HEK293 (cell line): ENCODE measurements at regions of chr16 and their contacts with region 1.

Region 1: GRCh38 chr16:57084257-57084770 is 8.1 kb upstream of the CPNE2 start:
- H3K4me3 ChIP-seq: no peak overlapping the region
- H3K27ac ChIP-seq: no peak overlapping the region
- H3K4me1 ChIP-seq: no peaks in the 10 kb centered on the region
- CTCF ChIP-seq: peak; percentile 90

Region 2: GRCh38 chr16:57051696-57052228 is 32.6 kb before region 1 on chr16:
- CTCF ChIA-PET with region 1: interaction called, 12 read pairs
- POLR2A ChIA-PET with region 1: no interaction called
- H3K4me3 ChIP-seq: no peak overlapping the region
- H3K27ac ChIP-seq: no peak overlapping the region
- H3K4me1 ChIP-seq: no peaks in the 10 kb centered on the region
- CTCF ChIP-seq: no peak

Region 3: GRCh38 chr16:57071831-57072582 is 12.3 kb before region 1 on chr16:
- CTCF ChIA-PET with region 1: interaction called, 12 read pairs
- POLR2A ChIA-PET with region 1: no interaction called
- H3K4me3 ChIP-seq: no peak overlapping the region
- H3K27ac ChIP-seq: no peak overlapping the region
- H3K4me1 ChIP-seq: no peaks in the 10 kb centered on the region
- CTCF ChIP-seq: no peak

Region 4: DNA sequence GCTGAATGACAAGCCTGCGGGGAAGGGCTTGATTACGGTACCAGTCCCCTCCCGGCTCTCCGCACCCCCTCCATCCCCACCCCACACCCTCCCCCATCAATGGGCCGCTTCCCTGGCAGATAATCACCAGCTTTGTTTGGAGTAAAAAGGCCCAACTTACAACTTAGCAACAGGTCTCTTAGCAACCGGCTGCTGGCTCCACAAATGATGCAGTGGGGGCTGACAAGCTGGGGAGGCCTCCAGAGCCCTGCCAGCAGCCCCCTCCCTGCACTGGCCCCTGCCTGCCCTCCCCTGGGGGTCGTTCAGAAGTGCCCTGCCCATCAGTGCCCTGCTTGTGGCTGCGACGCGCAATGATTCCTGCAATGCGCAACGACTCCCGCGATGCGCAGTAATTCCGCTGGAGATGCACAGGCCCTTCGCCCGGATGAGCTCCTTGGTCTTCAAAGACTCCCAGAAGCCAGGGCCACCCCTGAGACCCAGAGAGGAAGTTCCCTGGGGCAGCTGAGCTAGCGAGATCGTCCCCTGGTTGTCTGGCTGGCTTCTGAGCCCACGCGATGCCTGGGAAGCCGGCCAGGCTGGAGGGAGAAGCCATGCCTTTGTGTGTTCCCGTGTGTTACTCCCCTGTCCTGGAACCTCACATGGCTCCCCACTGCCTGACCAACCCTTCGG is 31.3 kb after region 1 on chr16:
- CTCF ChIA-PET with region 1: interaction called, 13 read pairs
- POLR2A ChIA-PET with region 1: no interaction called
- H3K4me3 ChIP-seq: no peak overlapping the region
- H3K27ac ChIP-seq: no peak overlapping the region
- H3K4me1 ChIP-seq: no peaks in the 10 kb centered on the region
- CTCF ChIP-seq: no peak

Region 5: DNA sequence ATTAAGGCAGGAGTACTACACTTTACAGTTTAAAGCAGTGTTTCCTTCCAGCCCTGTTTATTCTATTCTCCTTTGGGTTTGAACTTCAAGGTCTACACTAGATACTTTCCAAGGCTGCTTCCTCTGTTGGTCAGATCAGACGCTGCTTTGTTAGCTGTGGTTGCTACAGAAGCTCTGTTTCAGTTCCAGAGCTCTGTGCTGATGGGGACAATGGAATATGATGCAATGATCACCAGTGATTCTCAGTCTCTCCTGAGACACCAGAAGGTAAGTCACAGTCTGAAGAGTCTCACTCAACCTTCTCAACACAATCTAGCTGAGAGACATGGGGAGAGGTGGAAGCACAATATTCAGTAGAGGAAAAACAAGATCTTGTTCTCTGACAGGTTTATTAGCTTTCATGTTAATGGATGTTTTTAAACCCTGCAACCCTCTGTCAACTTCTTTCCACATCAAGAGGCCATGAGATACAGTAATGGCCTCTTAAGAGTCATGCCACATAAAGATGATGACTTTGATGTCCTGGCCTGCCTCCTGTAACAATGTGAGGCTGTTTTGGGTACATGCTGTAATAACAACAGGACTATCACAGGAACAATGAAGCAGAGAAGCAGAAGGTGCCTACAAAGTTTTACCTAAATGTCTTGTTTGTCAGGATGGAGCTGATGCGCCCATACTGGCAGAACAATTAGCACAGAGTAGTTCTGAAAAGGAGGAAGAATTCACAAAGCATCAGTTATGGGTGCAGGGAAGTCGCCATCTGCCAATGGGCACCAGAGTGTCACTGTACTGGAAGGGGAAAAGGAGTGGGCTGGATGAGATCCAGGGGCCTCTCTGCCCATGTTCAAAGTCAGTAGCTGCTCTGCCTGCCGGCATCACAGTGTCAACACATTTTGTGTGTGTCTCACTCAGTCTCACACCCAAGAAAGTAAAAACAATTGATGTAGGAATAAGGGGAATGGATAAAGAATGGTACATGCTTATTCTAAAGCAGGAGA is 68.1 kb after region 1 on chr16:
- CTCF ChIA-PET with region 1: interaction called, 15 read pairs
- POLR2A ChIA-PET with region 1: no interaction called
- H3K4me3 ChIP-seq: no peak overlapping the region
- H3K27ac ChIP-seq: no peak overlapping the region
- H3K4me1 ChIP-seq: no peaks in the 10 kb centered on the region
- CTCF ChIP-seq: no peak

Region 6: DNA sequence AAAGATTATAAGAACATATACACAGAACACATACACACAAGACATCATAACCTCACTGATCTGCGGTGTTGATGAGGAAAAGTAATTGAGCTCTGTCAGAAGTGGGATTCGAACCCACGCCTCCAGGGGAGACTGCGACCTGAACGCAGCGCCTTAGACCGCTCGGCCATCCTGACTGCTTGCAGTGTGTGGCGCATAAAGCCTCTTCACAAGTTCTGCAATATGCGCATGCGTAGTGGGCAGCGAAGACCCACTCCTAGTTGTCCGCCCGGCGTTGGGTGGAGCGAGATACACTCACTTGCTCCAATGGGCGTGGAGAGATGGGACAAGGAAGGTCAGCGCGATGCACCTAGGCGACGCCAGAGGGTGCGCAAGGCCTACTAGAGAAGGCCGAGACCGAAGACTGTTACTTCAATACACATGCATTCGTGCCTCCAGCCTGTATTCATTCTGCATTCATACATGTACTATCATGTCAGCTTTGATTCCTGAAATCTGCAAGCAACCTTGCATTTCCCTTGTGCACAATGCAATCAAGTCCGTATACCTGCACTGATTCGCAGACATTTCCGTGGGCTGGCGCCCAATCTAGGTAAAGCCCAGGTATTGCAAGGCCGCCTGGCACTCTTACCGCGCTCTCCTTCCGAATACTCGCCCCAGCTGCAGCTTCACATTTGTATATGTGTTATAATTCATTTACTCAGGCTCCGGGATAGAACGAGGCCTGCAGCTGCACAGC is 216.2 kb after region 1 on chr16:
- CTCF ChIA-PET with region 1: interaction called, 11 read pairs
- POLR2A ChIA-PET with region 1: no interaction called
- H3K4me3 ChIP-seq: peak overlapping the region; percentile 38
- H3K27ac ChIP-seq: no peak overlapping the region
- H3K4me1 ChIP-seq: no peaks in the 10 kb centered on the region
- CTCF ChIP-seq: peak; percentile 99